ENCODE measurements at regions of chr2 and their contacts with region 1.

Region 1: GRCh38 chr2:189798312-189799029 is 14.2 kb downstream of the PMS1 start:
- DNase-seq: no peak
- H3K4me3 ChIP-seq: no peak overlapping the region
- H3K27me3 ChIP-seq: no peaks in the 10 kb centered on the region
- CTCF ChIP-seq: peak; percentile 50

Region 2: GRCh38 chr2:189829102-189829833 is 30.8 kb after region 1 on chr2:
- CTCF ChIA-PET with region 1: interaction called, 4 read pairs
- POLR2A ChIA-PET with region 1: interaction called, 11 read pairs
- DNase-seq: no peak
- H3K4me3 ChIP-seq: no peak overlapping the region
- H3K27me3 ChIP-seq: no peaks in the 10 kb centered on the region
- CTCF ChIP-seq: no peak

Region 3: DNA sequence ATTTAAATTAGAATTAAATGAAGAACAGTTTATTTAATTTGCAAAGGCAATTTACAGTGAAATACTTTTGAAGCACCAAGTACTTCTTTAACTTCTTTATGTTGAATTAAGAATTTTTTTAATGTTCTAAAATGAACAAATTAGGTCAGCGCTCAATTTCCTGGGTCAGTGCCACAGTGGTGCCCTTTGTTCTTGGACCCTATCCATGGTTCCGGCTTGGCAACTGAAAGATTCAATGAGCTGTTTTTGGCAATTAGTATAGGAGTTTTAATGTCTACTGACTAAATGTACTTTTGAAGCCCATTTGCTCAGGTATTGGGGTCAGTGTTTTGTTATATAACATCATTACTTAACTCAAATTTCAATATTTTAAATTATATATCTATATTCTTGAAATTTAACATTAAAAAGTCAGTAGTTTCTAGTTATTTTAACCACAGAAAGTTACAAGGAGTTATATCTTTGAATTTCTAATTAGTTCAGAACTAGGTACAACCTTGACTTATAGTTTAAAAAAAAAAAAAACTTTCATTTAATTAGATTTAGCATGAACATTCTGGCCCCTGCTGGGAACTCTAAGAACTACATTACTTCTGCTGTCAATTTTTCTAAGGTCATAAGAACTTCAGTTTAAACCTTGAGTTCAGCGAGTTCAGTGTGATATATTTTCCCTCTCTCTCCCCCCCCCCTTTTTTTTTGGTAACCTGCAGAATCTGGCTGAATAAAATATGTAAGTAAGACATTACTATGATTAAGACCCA is 271.6 kb after region 1 on chr2:
- CTCF ChIA-PET with region 1: interaction called, 40 read pairs
- POLR2A ChIA-PET with region 1: no interaction called
- DNase-seq: peak; percentile 37
- H3K4me3 ChIP-seq: no peak overlapping the region
- H3K27me3 ChIP-seq: no peaks in the 10 kb centered on the region
- CTCF ChIP-seq: peak; percentile 58

Region 4: GRCh38 chr2:190079160-190079559 is 280.7 kb after region 1 on chr2:
- CTCF ChIA-PET with region 1: interaction called, 11 read pairs
- POLR2A ChIA-PET with region 1: no interaction called
- DNase-seq: no peak
- H3K4me3 ChIP-seq: no peak overlapping the region
- H3K27me3 ChIP-seq: peaks cover 1% of the 10 kb centered on the region; the same call in 1 of the 2 replicates
- CTCF ChIP-seq: no peak

Region 5: GRCh38 chr2:190180313-190181122 is 382.0 kb after region 1 on chr2:
- CTCF ChIA-PET with region 1: no interaction called
- POLR2A ChIA-PET with region 1: no interaction called
- DNase-seq: no peak
- H3K4me3 ChIP-seq: peak overlapping the region; percentile 56
- H3K27me3 ChIP-seq: no peaks in the 10 kb centered on the region; the same call in 1 of the 2 replicates
- CTCF ChIP-seq: peak; percentile 52

Region 6: DNA sequence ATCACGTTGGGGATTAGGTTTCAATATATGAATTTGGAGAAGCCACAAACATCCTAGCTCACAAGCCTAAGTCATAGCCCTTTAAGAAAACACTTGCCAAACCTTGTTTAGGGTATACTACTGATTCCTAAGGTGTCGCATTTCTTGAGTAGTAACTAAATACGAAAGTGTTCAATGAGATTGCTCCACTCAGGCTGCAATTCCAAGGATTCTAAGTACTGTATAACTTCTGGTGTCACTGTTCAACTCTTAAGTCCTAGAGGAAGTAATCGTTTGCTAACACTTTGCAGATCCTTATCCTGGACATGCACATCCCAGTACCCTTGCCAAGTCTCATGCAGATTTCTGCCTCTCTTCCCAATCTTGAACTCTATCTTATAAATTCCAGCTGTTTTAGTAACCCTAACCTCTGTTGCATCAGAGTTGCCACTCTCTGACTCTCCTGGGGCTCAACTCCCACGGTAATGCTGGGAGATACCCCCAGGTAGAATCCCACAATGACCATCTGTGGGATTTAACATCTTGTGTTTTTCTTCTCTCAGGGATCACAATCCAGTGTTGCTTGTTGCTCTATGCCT is 398.8 kb after region 1 on chr2:
- CTCF ChIA-PET with region 1: no interaction called
- POLR2A ChIA-PET with region 1: no interaction called
- DNase-seq: no peak
- H3K4me3 ChIP-seq: no peak overlapping the region
- H3K27me3 ChIP-seq: no peaks in the 10 kb centered on the region
- CTCF ChIP-seq: no peak

Measured in BJ (cell line).